ENCODE measurements at regions of chr3 and their contacts with region 1.

Region 1: GRCh38 chr3:180188512-180189309 is 152.0 kb upstream of the PEX5L start:
- DNase-seq: no peak
- CTCF ChIP-seq: no peak

Region 2: GRCh38 chr3:180163719-180164118 is 25.0 kb before region 1 on chr3:
- CTCF ChIA-PET with region 1: no interaction called
- POLR2A ChIA-PET with region 1: no interaction called
- DNase-seq: no peak
- CTCF ChIP-seq: no peak

Region 3: DNA sequence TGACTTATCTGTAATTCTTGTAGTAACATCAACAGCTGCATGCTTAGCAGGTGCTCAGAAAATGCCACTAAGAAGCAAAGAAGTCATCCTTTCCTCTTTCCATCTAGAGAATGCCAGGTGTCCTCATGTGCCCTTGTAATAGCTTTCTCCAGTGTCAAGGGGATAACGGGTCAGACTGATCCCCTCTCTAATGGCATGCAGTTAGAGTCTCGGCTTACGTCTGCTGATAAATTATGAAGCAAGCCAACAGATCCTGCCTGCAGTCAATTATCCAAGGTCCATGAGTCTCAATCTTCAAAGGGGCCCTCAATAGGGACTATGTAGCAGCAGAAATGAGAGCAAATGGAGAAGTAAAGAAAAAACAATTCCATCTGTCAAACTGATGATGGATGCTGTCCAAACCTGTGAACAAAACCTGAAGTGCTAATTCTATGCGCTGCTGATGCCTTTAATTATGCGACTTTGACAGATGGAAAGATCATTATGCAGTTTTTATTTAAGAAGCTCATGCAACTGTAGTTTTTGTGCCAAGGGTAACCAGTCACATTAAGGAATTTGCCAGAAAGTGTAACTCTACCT is 10.8 kb after region 1 on chr3:
- CTCF ChIA-PET with region 1: interaction called, 11 read pairs
- POLR2A ChIA-PET with region 1: no interaction called
- DNase-seq: no peak
- CTCF ChIP-seq: no peak